Breast epithelium (tissue), 4 donors: ENCODE measurements at regions of chr19 and their contacts with region 1.

Region 1: GRCh38 chr19:18919086-18919899 is at the starts of genes COPE and DDX49:
- DNase-seq: peak; percentile 96 to 100
- H3K4me3 ChIP-seq: peak within 1 kb of the TSS; percentile 77 to 98 (median 93)
- H3K27ac ChIP-seq: peak within 1 kb of the TSS; percentile 91 to 93
- H3K4me1 ChIP-seq: peaks cover 8% of the 10 kb centered on the region in 2 donors
- H3K27me3 ChIP-seq: no peaks in the 10 kb centered on the region
- CTCF ChIP-seq: no peak
- POLR2A ChIP-seq: peak; percentile 89
- total RNA-seq, gene COPE: 144 to 204 (median 190) TPM
- total RNA-seq, gene DDX49: 34.1 to 44.9 (median 40.2) TPM

Region 2: GRCh38 chr19:18878858-18879578 is 40.3 kb before region 1 on chr19:
- intact Hi-C with region 1: loop called (anchors 1 kb)
- DNase-seq: no peak
- H3K4me3 ChIP-seq: no peak overlapping the region
- H3K27ac ChIP-seq: no peak overlapping the region
- H3K4me1 ChIP-seq: no peaks in the 10 kb centered on the region
- H3K27me3 ChIP-seq: no peaks in the 10 kb centered on the region
- CTCF ChIP-seq: no peak
- POLR2A ChIP-seq: no peak

Region 3: GRCh38 chr19:18985257-18985656 is 66.0 kb after region 1 on chr19:
- intact Hi-C with region 1: no loop called
- DNase-seq: no peak
- H3K4me3 ChIP-seq: no peak overlapping the region
- H3K27ac ChIP-seq: no peak overlapping the region
- H3K4me1 ChIP-seq: no peaks in the 10 kb centered on the region
- H3K27me3 ChIP-seq: no peaks in the 10 kb centered on the region
- CTCF ChIP-seq: no peak
- POLR2A ChIP-seq: no peak